Left ventricle myocardium inferior (tissue), 1 donor: ENCODE measurements at regions of chr6 and their contacts with region 1.

Region 1: DNA sequence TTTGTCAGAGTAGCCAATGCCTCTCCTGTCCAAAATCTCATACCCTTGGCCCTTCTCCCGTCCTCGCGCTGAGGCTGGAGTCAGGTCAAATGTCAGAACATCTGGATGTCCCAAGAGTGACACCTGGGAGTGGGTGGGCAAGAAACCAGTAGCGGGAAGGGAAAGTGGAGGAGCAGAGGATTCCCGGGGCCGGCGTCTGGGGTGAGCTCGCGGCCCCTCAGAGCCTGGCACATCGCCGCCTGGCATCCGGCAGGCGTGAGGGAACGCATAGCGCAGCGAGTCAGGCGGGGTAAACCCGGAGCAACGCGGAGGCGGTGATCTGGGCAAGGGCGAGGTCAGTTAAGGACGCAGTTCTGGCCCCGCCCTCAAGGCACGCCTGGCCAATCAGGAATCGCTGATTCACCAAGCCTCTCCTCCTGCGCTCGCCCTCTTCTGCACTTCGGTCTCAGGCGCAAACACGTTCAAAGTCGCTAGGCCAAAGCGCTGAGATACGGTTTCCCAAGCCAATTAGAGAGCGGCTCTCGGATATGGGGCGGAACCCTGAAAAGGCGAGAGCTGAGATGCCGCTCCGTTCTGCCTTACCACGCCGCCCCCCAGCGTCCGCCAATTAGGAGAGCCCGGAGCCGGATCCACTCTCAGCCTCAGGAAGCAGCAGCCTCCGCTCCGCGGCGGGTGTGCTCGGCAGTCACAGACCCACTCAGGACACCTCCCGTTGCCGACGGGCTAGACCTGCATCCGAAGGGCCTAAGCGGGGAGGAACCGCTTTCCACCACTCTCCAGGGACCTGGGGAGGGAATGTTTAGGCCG is 22.5 kb downstream of the VPS52 start:
- DNase-seq: peak; percentile 97
- H3K4me3 ChIP-seq: peak overlapping the region; percentile 72
- H3K27ac ChIP-seq: peak overlapping the region; percentile 96
- H3K4me1 ChIP-seq: peaks cover 30% of the 10 kb centered on the region
- H3K27me3 ChIP-seq: peaks cover 13% of the 10 kb centered on the region
- CTCF ChIP-seq: peak; percentile 35

Region 2: GRCh38 chr6:33000055-33000454 is 249.1 kb before region 1 on chr6:
- intact Hi-C with region 1: no loop called
- DNase-seq: no peak
- H3K4me3 ChIP-seq: no peak overlapping the region
- H3K27ac ChIP-seq: no peak overlapping the region
- H3K4me1 ChIP-seq: no peaks in the 10 kb centered on the region
- H3K27me3 ChIP-seq: peaks cover 59% of the 10 kb centered on the region
- CTCF ChIP-seq: peak; percentile 49

Region 3: DNA sequence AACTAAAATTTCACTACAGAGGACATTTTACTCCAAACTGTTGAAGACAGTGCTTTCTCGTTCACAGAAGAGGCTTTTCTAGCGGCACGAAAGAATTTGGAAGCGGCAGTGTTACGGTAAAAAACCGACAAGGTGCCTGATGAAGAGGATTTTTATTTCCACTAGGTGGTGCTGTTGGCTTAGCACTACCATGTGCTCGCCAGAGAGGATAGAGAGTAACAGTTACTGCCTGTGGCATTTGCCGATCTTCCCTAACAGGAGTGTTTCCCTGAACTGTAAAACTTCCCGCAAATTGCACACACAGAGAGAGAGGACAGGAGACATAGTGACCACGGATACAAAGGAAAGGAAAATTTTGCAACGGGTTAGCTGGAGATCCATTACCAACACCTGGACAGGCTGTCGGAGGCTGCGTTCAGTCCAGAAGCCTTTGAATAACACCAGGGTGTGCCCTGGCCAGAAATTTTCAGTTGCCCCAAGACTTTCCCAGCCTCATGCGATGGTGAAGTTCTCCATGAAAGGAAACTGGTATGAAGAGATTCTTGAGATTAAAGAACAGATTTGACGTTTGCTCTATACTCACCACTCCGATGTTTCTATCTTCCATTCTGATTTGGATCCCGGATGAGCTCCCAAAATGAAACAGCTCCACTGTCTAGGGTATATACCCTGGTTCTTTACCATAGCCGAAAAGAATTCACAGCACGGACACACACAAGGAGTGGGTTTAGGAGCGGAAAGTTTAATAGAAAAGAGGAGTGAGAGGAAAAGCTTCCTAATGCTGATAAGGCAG is 125.2 kb before region 1 on chr6:
- intact Hi-C with region 1: loop called (anchors 5 kb)
- DNase-seq: no peak
- H3K4me3 ChIP-seq: no peak overlapping the region
- H3K27ac ChIP-seq: no peak overlapping the region
- H3K4me1 ChIP-seq: no peaks in the 10 kb centered on the region
- H3K27me3 ChIP-seq: peaks cover 14% of the 10 kb centered on the region
- CTCF ChIP-seq: peak; percentile 53

Region 4: GRCh38 chr6:33161354-33162331 is 87.5 kb before region 1 on chr6:
- intact Hi-C with region 1: loop called (anchors 5 kb)
- DNase-seq: peak; percentile 85
- H3K4me3 ChIP-seq: peak overlapping the region; percentile 67
- H3K27ac ChIP-seq: peak overlapping the region; percentile 43
- H3K4me1 ChIP-seq: peaks cover 16% of the 10 kb centered on the region
- H3K27me3 ChIP-seq: no peaks in the 10 kb centered on the region
- CTCF ChIP-seq: peak; percentile 99